ENCODE measurements at regions of chr15 and their contacts with region 1.

Region 1: GRCh38 chr15:39788108-39788507 is 5.5 kb upstream of the FSIP1 start:
- DNase-seq: no peak
- H3K4me3 Mint-ChIP-seq: no peak overlapping the region
- H3K27ac Mint-ChIP-seq: no peak overlapping the region
- H3K4me1 Mint-ChIP-seq: peaks cover 45% of the 10 kb centered on the region
- H3K27me3 Mint-ChIP-seq: peaks cover 9% of the 10 kb centered on the region

Region 2: GRCh38 chr15:39874890-39875549 is 86.9 kb after region 1 on chr15:
- CTCF ChIA-PET with region 1: interaction called, 10 read pairs
- POLR2A ChIA-PET with region 1: no interaction called
- DNase-seq: peak; percentile 29
- H3K4me3 Mint-ChIP-seq: no peak overlapping the region
- H3K27ac Mint-ChIP-seq: no peak overlapping the region
- H3K4me1 Mint-ChIP-seq: peaks cover 4% of the 10 kb centered on the region
- H3K27me3 Mint-ChIP-seq: peaks cover 12% of the 10 kb centered on the region

Measured in activated CD4-positive, alpha-beta memory T cell treated with anti-CD3 and anti-CD28 coated beads, Interleukin-2, amount 10 ng/mL, durations not matched to agents 7 days and 5 days (primary cell).